RWPE1 (cell line): ENCODE measurements at regions of chr5 and their contacts with region 1.

Region 1: GRCh38 chr5:17216176-17216973 is 1.1 kb upstream of the BASP1 start:
- DNase-seq: peak; percentile 73
- H3K27ac ChIP-seq: peak overlapping the region; percentile 80
- CTCF ChIP-seq: peak; percentile 85

Region 2: DNA sequence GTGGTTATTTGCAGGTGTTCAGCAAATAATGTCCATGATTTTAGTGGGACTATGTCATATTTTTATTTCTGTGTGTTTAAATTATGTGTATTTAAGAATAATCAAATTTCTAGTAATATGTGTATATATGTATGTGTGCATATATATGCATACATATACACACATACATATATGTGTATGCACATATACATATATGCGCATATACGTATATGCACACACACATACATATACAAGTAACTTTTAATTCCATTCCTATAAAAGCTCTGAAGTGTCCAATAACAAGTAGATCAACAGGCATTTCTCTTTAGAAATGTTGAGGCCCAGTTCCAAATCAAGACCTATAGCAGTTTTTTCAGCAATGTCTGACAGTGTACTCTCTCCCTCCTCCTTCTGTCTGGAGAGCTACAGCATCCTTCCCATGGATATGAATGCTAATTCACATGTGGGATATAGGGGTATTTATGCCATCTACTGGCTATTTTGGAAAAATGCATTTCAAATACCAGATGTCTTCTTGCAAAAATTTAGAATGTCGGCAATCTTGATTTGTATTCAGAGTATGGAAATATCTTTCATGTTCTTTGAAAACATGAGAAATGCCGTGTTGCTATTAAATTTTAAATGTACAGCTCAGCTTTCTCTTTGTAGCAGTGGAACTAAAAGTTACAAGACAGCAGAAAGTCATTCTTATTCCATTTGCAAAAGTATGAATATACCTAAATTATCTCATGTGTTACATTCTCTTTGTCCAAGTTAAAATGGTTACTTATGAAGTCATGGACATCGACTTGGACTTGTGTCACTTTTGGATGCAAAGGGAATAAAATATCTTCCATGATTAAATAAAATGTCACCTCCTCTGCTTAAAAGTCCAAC is 1065.5 kb after region 1 on chr5:
- CTCF ChIA-PET with region 1: interaction called, 15 read pairs
- POLR2A ChIA-PET with region 1: no interaction called
- DNase-seq: peak; percentile 66
- H3K27ac ChIP-seq: no peak overlapping the region
- CTCF ChIP-seq: peak; percentile 62

Region 3: GRCh38 chr5:18305297-18305924 is 1089.0 kb after region 1 on chr5:
- CTCF ChIA-PET with region 1: interaction called, 28 read pairs
- POLR2A ChIA-PET with region 1: no interaction called
- DNase-seq: peak; percentile 46
- H3K27ac ChIP-seq: no peak overlapping the region
- CTCF ChIP-seq: peak; percentile 91